Left lung (tissue), 14 donors: ENCODE measurements at regions of chr2 and their contacts with region 1.

Region 1: DNA sequence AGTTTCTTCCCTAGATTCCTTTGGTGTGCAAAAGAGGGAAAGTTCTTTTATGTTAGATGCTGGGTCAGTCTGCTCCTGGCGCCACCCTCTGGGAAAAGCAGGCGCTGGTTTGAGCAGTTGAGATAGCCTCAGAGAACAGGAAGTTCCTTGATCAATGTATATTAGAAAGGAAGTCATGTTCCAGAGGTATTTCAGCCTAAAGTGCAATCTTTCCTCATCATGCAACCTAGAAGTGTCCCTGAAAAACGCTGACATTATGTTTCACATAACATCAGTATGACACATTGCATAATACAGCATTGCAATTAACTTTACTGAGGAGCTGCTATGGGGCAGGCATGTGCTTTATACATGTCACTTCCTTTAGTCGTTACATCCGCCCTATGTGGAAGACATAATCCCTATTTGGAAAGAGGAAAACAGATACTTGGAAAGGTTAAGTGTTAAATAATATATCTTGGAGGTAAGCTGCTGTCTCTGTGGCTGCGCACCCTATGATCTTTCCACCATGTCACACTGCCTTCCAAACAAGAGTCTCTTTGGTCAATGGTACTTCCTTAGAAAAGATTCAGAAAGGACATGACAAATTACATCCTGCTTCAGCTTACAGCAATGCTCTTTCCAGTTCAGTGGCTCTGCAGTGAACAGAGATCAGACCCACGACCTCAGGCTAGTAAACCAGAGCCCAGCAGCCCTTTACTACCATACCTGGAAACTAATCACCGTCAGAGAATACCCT is 369.7 kb downstream of the RAD51AP2 start:
- DNase-seq: peak in 3 of 4 donors; percentile 4 to 24 (median 18)
- ATAC-seq: no peak
- H3K4me3 ChIP-seq: no peak overlapping the region
- H3K27ac ChIP-seq: no peak overlapping the region
- H3K4me1 ChIP-seq: no peaks in the 10 kb centered on the region
- H3K27me3 ChIP-seq: no peaks in the 10 kb centered on the region
- CTCF ChIP-seq: peak in 1 of 2 donors; percentile 24

Region 2: DNA sequence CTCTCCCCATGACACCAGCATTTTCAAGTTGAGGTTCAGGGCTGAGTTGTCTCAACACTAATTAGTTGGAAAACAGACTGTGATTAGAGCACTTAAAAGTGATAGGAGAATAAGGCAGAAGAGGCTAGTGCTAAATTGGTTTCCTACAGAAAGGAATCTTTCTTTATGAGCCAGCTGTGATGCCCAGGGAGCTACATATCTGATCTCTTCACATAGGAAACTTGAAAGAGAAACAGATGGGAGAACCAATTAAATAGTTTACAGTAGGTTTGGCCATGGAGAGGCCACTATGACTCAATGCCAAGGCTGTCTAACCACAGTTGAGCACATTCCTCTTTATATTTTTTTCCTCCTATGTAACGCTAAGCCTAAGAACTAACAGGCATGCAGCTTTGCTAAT is 64.7 kb before region 1 on chr2:
- intact Hi-C with region 1: no loop called
- DNase-seq: no peak
- ATAC-seq: no peak
- H3K4me3 ChIP-seq: no peak overlapping the region
- H3K27ac ChIP-seq: no peak overlapping the region
- H3K4me1 ChIP-seq: no peaks in the 10 kb centered on the region
- H3K27me3 ChIP-seq: no peaks in the 10 kb centered on the region
- CTCF ChIP-seq: no peak

Region 3: GRCh38 chr2:17309741-17310339 is 161.3 kb after region 1 on chr2:
- intact Hi-C with region 1: loop called in 1 of 2 experiments (anchors 10 kb)
- DNase-seq: peak in 2 of 4 donors; percentile 22 to 54
- ATAC-seq: peak; percentile 89
- H3K4me3 ChIP-seq: no peak overlapping the region
- H3K27ac ChIP-seq: no peak overlapping the region
- H3K4me1 ChIP-seq: no peaks in the 10 kb centered on the region
- H3K27me3 ChIP-seq: no peaks in the 10 kb centered on the region
- CTCF ChIP-seq: peak; percentile 49 to 70